Activated B cell treated with CpG ODN at 0.5 μM for 24 hours (primary cell): ENCODE measurements at regions of chr5 and their contacts with region 1.

Region 1: GRCh38 chr5:151164686-151165392 is 7.3 kb upstream of the ANXA6 start:
- DNase-seq: peak; percentile 59
- ATAC-seq: peak; percentile 97
- H3K4me3 Mint-ChIP-seq: no peak overlapping the region
- H3K27ac Mint-ChIP-seq: peak overlapping the region; percentile 65
- H3K4me1 Mint-ChIP-seq: peaks cover 39% of the 10 kb centered on the region
- H3K27me3 Mint-ChIP-seq: no peaks in the 10 kb centered on the region
- CTCF ChIP-seq: peak; percentile 72

Region 2: GRCh38 chr5:151002250-151002649 is 162.6 kb before region 1 on chr5:
- CTCF ChIA-PET with region 1: interaction called, 5 read pairs
- POLR2A ChIA-PET with region 1: no interaction called
- intact Hi-C with region 1: loop called (anchors 1 kb)
- DNase-seq: no peak
- ATAC-seq: no peak
- H3K4me3 Mint-ChIP-seq: no peak overlapping the region
- H3K27ac Mint-ChIP-seq: no peak overlapping the region
- H3K4me1 Mint-ChIP-seq: no peaks in the 10 kb centered on the region
- H3K27me3 Mint-ChIP-seq: peaks cover 3% of the 10 kb centered on the region
- CTCF ChIP-seq: no peak

Region 3: GRCh38 chr5:151086905-151087360 is 77.9 kb before region 1 on chr5:
- CTCF ChIA-PET with region 1: no interaction called
- POLR2A ChIA-PET with region 1: no interaction called
- intact Hi-C with region 1: no loop called
- DNase-seq: peak; percentile 57
- ATAC-seq: peak; percentile 86
- H3K4me3 Mint-ChIP-seq: peak overlapping the region; percentile 83
- H3K27ac Mint-ChIP-seq: peak overlapping the region; percentile 76
- H3K4me1 Mint-ChIP-seq: peaks cover 70% of the 10 kb centered on the region
- H3K27me3 Mint-ChIP-seq: no peaks in the 10 kb centered on the region
- CTCF ChIP-seq: no peak

Region 4: GRCh38 chr5:151110122-151110681 is 54.6 kb before region 1 on chr5:
- CTCF ChIA-PET with region 1: interaction called, 155 read pairs
- POLR2A ChIA-PET with region 1: interaction called, 4 read pairs
- intact Hi-C with region 1: loop called (anchors 1 kb)
- DNase-seq: no peak
- ATAC-seq: no peak
- H3K4me3 Mint-ChIP-seq: peak overlapping the region; percentile 6
- H3K27ac Mint-ChIP-seq: peak overlapping the region; percentile 20
- H3K4me1 Mint-ChIP-seq: peaks cover 33% of the 10 kb centered on the region
- H3K27me3 Mint-ChIP-seq: no peaks in the 10 kb centered on the region
- CTCF ChIP-seq: no peak

Region 5: GRCh38 chr5:151150471-151151262 is 14.2 kb before region 1 on chr5:
- CTCF ChIA-PET with region 1: interaction called, 11 read pairs
- POLR2A ChIA-PET with region 1: interaction called, 4 read pairs
- intact Hi-C with region 1: no loop called
- DNase-seq: peak; percentile 32
- ATAC-seq: peak; percentile 62
- H3K4me3 Mint-ChIP-seq: peak overlapping the region; percentile 33
- H3K27ac Mint-ChIP-seq: peak overlapping the region; percentile 87
- H3K4me1 Mint-ChIP-seq: peaks cover 96% of the 10 kb centered on the region
- H3K27me3 Mint-ChIP-seq: no peaks in the 10 kb centered on the region
- CTCF ChIP-seq: no peak

Region 6: DNA sequence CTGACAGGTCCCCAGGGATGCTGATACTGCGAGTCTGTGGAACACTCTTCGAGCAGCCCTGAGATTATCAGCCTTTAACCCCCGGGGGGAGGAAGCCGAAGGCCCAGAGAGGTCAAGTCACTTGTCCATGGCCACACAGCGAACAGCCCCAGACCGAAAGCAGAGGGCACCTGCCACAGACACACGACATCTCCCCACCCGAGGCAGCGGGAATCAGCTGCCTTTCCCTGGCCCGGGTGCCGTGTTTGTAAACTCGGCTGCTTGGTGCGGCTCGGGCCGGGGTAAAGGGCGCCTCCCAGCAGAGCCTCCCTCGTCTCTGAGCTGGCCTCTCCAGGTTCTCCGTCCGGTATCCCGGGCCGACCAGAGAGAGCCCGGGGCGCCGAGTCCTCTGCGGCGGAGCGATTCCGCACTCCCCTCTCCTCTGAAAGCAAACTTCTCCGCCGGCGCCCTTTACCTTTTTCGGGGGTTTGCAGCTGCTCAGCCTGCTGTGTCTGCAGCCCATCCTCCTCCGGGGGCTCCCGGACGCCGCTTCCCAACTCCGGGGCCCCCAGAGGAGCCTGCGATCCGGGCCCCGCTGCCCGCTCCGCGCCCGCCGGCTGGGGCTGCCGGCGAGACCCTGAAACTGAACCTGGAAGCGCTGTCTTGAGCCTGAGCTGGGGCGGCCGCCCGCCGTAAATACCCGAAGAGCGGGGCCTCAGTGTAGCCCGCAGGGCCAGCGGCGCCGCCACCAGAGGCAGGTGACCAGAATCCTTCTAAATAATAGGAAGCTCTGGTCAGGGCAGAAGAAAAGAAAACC is 58.8 kb after region 1 on chr5 and contains the start of gene CCDC69:
- CTCF ChIA-PET with region 1: interaction called, 18 read pairs
- POLR2A ChIA-PET with region 1: interaction called, 11 read pairs
- intact Hi-C with region 1: no loop called
- DNase-seq: peak; percentile 56
- ATAC-seq: peak; percentile 51
- H3K4me3 Mint-ChIP-seq: peak within 1 kb of the TSS; percentile 91
- H3K27ac Mint-ChIP-seq: peak within 1 kb of the TSS; percentile 93
- H3K4me1 Mint-ChIP-seq: peaks cover 73% of the 10 kb centered on the region
- H3K27me3 Mint-ChIP-seq: no peaks in the 10 kb centered on the region
- CTCF ChIP-seq: no peak
- total RNA-seq, gene CCDC69: 98.9 and 109 TPM in 2 replicates

Region 7: DNA sequence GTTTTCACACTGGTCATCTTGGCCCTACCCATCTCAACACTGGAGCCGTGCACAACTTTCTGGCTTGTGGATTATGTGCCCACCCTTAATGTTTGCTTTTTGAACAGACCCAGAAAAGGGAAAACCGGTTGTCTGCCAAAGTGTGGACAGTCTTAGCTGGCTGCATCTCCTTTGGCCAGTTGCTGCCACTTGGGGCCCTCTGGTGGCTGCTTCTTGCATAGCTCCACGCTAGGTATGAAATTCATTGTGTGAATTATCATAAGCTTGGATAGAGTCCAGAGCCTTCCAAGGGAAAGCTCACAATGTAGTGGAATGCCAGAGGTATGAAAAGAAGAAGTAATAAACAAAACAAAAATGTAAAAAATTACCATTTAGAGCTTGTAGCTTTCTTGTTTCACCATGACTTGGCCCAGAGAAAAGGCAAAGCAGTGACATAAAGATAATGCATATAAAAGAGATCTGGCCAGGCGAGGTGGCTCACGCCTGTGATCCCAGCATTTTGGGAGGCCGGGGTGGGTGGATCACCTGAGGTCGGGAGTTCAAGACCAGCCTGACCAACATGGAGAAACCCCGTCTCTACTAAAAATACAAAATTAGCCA is 151.3 kb after region 1 on chr5:
- CTCF ChIA-PET with region 1: interaction called, 18 read pairs
- POLR2A ChIA-PET with region 1: interaction called, 3 read pairs
- intact Hi-C with region 1: loop called (anchors 2 kb)
- DNase-seq: peak; percentile 40
- ATAC-seq: peak; percentile 83
- H3K4me3 Mint-ChIP-seq: no peak overlapping the region
- H3K27ac Mint-ChIP-seq: no peak overlapping the region
- H3K4me1 Mint-ChIP-seq: peaks cover 11% of the 10 kb centered on the region
- H3K27me3 Mint-ChIP-seq: peaks cover 5% of the 10 kb centered on the region
- CTCF ChIP-seq: peak; percentile 64